ENCODE measurements at regions of chr4 and their contacts with region 1.

Region 1: GRCh38 chr4:26088433-26088928 is 174.5 kb downstream of the SMIM20 start:
- DNase-seq: no peak
- ATAC-seq: peak; percentile 43

Region 2: GRCh38 chr4:25133132-25133531 is 955.3 kb before region 1 on chr4:
- intact Hi-C with region 1: no loop called
- DNase-seq: no peak
- ATAC-seq: no peak

Region 3: GRCh38 chr4:26206339-26206738 is 117.9 kb after region 1 on chr4:
- intact Hi-C with region 1: loop called (anchors 5 kb)
- DNase-seq: no peak
- ATAC-seq: peak; percentile 78

Measured in Right ventricle myocardium inferior (tissue), 1 donor.